CD4-positive, alpha-beta memory T cell (primary cell): ENCODE measurements at regions of chr3 and their contacts with region 1.

Region 1: DNA sequence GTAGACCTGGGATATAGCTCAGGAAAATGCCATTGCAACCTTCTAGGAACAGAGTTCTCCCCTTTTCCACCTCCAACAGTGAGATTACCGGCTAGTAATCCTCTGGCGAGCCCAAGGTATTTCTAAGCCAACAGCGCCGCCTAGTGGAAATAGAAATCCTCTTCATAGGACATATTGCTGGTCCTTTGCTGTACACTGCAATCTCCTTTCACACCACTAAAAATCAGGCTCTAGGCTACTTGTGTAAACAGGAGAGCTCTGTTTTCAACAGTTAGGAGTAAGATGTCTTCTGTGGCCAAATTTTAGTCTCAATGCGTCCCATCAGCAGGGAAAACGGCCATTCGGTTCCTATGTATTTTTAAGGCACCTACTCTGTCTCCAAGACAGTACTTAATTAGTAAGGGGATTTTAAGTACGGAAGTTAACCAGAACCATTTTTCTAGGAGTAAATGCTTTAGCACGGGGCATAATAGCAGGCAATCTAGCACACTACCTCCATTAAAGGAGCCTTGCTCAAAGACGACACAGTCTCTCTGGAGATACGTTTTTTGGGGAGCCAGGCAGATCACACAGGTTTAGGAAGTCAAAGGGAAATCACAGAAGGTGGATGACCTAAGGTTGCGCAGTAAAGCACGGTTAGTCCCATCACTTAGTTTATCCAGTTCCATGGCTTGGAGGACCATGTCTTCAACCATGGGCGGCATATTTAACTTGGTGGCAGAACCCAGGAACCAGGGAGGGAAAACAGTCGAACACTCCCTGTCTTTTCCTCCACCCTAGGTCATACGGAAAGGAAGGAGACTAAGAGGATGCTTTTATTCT is 43.8 kb downstream of the NCEH1 start:
- DNase-seq: peak; percentile 75 to 79 (median 78)
- H3K4me3 ChIP-seq: no peak overlapping the region
- H3K4me3 Mint-ChIP-seq: peak overlapping the region in 7 of 8 donors; percentile 11 to 64 (median 33)
- H3K27ac ChIP-seq: no peak overlapping the region
- H3K27ac Mint-ChIP-seq: peak overlapping the region in 4 of 7 donors; percentile 18 to 76 (median 53)
- H3K4me1 ChIP-seq: peaks cover 17% of the 10 kb centered on the region
- H3K4me1 Mint-ChIP-seq: peaks cover 10 to 31% (median 21%) of the 10 kb centered on the region in 4 donors
- H3K27me3 ChIP-seq: no peaks in the 10 kb centered on the region
- H3K27me3 Mint-ChIP-seq: peaks cover 1 to 2% of the 10 kb centered on the region in 2 donors

Region 2: DNA sequence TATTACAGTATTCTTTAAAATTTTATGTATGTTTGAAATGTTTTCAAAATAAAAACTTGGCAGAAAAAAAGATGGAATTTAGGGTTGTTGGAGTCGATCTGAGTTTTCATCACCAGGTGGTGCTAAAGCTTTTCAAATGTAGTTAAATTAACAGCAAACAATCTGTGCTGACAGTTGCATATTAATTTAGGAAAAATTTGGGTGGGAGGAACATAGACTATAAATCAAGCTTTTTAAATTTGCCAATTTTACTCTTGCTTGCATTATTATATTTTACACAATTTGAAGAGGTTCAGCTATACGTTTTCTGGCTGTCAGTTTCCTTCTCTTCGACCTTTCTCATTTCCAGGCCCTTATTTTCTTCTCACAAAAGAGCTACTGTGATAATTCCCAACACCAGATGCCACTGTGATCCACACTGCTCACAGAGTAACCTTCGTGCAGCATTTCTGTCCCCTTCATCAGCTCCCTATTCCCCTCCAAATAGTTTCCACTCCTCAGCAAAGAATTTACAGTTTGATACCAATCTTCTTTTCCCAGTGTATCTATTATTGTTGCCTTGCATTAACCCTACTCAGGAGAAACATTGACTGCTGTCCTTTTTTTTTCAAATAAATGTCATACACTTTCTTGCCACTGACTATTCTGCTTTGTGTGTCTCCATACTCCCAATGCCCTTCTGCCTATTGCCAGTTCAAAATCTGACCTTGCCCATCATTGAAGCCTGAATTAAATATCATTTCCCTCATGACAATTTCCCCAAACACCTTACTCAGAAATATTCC is 1705.3 kb before region 1 on chr3:
- CTCF ChIA-PET with region 1: no interaction called
- POLR2A ChIA-PET with region 1: no interaction called
- intact Hi-C with region 1: loop called (anchors 2 kb)
- DNase-seq: peak in 3 of 5 donors; percentile 10 to 16 (median 15)
- H3K4me3 ChIP-seq: no peak overlapping the region
- H3K4me3 Mint-ChIP-seq: no peak overlapping the region
- H3K27ac ChIP-seq: no peak overlapping the region
- H3K27ac Mint-ChIP-seq: no peak overlapping the region
- H3K4me1 ChIP-seq: no peaks in the 10 kb centered on the region
- H3K4me1 Mint-ChIP-seq: no peaks in the 10 kb centered on the region
- H3K27me3 ChIP-seq: no peaks in the 10 kb centered on the region
- H3K27me3 Mint-ChIP-seq: peaks cover 0 to 2% of the 10 kb centered on the region in 2 donors

Region 3: GRCh38 chr3:171646357-171647133 is 1020.5 kb before region 1 on chr3:
- CTCF ChIA-PET with region 1: no interaction called
- POLR2A ChIA-PET with region 1: no interaction called
- intact Hi-C with region 1: loop called (anchors 2 kb)
- DNase-seq: peak in 4 of 5 donors; percentile 5 to 12 (median 6)
- H3K4me3 ChIP-seq: no peak overlapping the region
- H3K4me3 Mint-ChIP-seq: no peak overlapping the region
- H3K27ac ChIP-seq: no peak overlapping the region
- H3K27ac Mint-ChIP-seq: no peak overlapping the region
- H3K4me1 ChIP-seq: no peaks in the 10 kb centered on the region
- H3K4me1 Mint-ChIP-seq: no peaks in the 10 kb centered on the region
- H3K27me3 ChIP-seq: no peaks in the 10 kb centered on the region
- H3K27me3 Mint-ChIP-seq: no peaks in the 10 kb centered on the region

Region 4: GRCh38 chr3:172039436-172040077 is 627.5 kb before region 1 on chr3 and contains the start of gene FNDC3B:
- CTCF ChIA-PET with region 1: interaction called, 12 read pairs
- POLR2A ChIA-PET with region 1: no interaction called
- intact Hi-C with region 1: loop called (anchors 1 kb)
- DNase-seq: peak; percentile 90 to 93 (median 91)
- H3K4me3 ChIP-seq: peak within 1 kb of the TSS; percentile 61 to 62
- H3K4me3 Mint-ChIP-seq: peak within 1 kb of the TSS; percentile 94 to 99 (median 97)
- H3K27ac ChIP-seq: peak within 1 kb of the TSS; percentile 92
- H3K27ac Mint-ChIP-seq: peak within 1 kb of the TSS; percentile 94 to 99 (median 96)
- H3K4me1 ChIP-seq: peaks cover 29% of the 10 kb centered on the region
- H3K4me1 Mint-ChIP-seq: peaks cover 25 to 58% (median 37%) of the 10 kb centered on the region in 4 donors
- H3K27me3 ChIP-seq: no peaks in the 10 kb centered on the region
- H3K27me3 Mint-ChIP-seq: no peaks in the 10 kb centered on the region
- total RNA-seq, gene FNDC3B: 18.0 to 18.2 TPM

Region 5: DNA sequence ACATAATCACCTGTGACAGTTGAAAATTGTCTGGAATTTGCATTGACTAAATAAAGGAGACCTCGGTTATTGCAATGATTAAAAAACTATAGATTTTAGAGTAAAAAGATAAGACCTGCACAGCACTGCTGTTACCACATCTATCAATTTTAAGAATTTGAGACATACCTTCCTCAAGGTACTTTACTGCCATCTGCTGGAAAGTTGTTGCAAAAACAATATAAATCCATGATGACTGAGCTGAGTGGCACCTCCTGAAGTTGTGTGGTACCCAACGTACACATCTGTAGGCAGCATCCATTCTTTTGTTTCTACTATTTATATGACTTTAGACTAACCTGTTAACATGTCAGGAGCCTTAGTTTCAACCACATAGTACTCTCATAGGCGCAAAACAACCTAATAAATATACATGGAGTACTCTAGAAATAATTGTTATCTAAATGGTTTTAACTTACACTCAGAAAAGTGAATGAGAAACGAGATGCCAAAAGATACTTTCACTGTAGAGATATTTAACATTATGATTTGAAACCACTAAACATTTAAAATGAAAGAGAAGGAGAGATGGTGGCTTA is 325.5 kb before region 1 on chr3:
- CTCF ChIA-PET with region 1: interaction called, 14 read pairs
- POLR2A ChIA-PET with region 1: no interaction called
- intact Hi-C with region 1: no loop called
- DNase-seq: peak in 4 of 5 donors; percentile 58 to 66 (median 62)
- H3K4me3 ChIP-seq: no peak overlapping the region
- H3K4me3 Mint-ChIP-seq: no peak overlapping the region
- H3K27ac ChIP-seq: no peak overlapping the region
- H3K27ac Mint-ChIP-seq: no peak overlapping the region
- H3K4me1 ChIP-seq: no peaks in the 10 kb centered on the region
- H3K4me1 Mint-ChIP-seq: no peaks in the 10 kb centered on the region
- H3K27me3 ChIP-seq: no peaks in the 10 kb centered on the region
- H3K27me3 Mint-ChIP-seq: no peaks in the 10 kb centered on the region

Region 6: DNA sequence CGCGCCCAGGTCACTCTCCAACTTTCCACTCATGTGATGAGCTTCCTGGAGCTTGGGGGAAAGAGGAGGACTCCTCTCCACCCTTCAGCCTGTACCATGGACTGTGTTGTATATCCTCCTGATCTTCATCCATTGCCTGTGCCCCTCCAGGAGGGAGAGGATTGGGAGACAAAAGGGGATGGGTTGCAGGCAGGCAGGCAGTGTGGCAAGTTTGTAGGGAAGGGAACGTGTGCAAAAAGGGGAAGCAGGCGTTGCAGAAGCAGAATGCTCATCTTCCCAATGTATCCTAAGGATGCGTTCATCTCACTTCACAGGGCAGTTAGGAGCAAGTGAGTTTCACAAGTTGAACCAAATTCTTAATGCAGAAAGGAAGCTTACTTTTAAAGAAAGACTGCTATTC is 190.7 kb before region 1 on chr3:
- CTCF ChIA-PET with region 1: interaction called, 11 read pairs
- POLR2A ChIA-PET with region 1: no interaction called
- intact Hi-C with region 1: no loop called
- DNase-seq: no peak
- H3K4me3 ChIP-seq: peak overlapping the region in 1 of 2 donors; percentile 54
- H3K4me3 Mint-ChIP-seq: peak overlapping the region; percentile 67 to 96 (median 90)
- H3K27ac ChIP-seq: peak overlapping the region; percentile 54
- H3K27ac Mint-ChIP-seq: peak overlapping the region in 6 of 7 donors; percentile 32 to 94 (median 86)
- H3K4me1 ChIP-seq: peaks cover 19% of the 10 kb centered on the region
- H3K4me1 Mint-ChIP-seq: peaks cover 14 to 22% (median 16%) of the 10 kb centered on the region in 4 donors
- H3K27me3 ChIP-seq: no peaks in the 10 kb centered on the region
- H3K27me3 Mint-ChIP-seq: peaks cover 0 to 2% of the 10 kb centered on the region in 2 donors

Region 7: GRCh38 chr3:172606021-172606420 is 61.1 kb before region 1 on chr3:
- CTCF ChIA-PET with region 1: no interaction called
- POLR2A ChIA-PET with region 1: no interaction called
- intact Hi-C with region 1: no loop called
- DNase-seq: no peak
- H3K4me3 ChIP-seq: no peak overlapping the region
- H3K4me3 Mint-ChIP-seq: no peak overlapping the region
- H3K27ac ChIP-seq: no peak overlapping the region
- H3K27ac Mint-ChIP-seq: no peak overlapping the region
- H3K4me1 ChIP-seq: no peaks in the 10 kb centered on the region
- H3K4me1 Mint-ChIP-seq: no peaks in the 10 kb centered on the region
- H3K27me3 ChIP-seq: no peaks in the 10 kb centered on the region
- H3K27me3 Mint-ChIP-seq: no peaks in the 10 kb centered on the region

Region 8: GRCh38 chr3:172646439-172647015 is 20.6 kb before region 1 on chr3:
- CTCF ChIA-PET with region 1: interaction called, 63 read pairs
- POLR2A ChIA-PET with region 1: no interaction called
- intact Hi-C with region 1: no loop called
- DNase-seq: no peak
- H3K4me3 ChIP-seq: no peak overlapping the region
- H3K4me3 Mint-ChIP-seq: no peak overlapping the region
- H3K27ac ChIP-seq: no peak overlapping the region
- H3K27ac Mint-ChIP-seq: no peak overlapping the region
- H3K4me1 ChIP-seq: no peaks in the 10 kb centered on the region
- H3K4me1 Mint-ChIP-seq: no peaks in the 10 kb centered on the region
- H3K27me3 ChIP-seq: no peaks in the 10 kb centered on the region
- H3K27me3 Mint-ChIP-seq: no peaks in the 10 kb centered on the region